Activated CD8-positive, alpha-beta memory T cell treated with anti-CD3 and anti-CD28 coated beads, Interleukin-2, amount 10 ng/mL, durations not matched to agents 7 days and 5 days (primary cell): ENCODE measurements at regions of chr6 and their contacts with region 1.

Region 1: DNA sequence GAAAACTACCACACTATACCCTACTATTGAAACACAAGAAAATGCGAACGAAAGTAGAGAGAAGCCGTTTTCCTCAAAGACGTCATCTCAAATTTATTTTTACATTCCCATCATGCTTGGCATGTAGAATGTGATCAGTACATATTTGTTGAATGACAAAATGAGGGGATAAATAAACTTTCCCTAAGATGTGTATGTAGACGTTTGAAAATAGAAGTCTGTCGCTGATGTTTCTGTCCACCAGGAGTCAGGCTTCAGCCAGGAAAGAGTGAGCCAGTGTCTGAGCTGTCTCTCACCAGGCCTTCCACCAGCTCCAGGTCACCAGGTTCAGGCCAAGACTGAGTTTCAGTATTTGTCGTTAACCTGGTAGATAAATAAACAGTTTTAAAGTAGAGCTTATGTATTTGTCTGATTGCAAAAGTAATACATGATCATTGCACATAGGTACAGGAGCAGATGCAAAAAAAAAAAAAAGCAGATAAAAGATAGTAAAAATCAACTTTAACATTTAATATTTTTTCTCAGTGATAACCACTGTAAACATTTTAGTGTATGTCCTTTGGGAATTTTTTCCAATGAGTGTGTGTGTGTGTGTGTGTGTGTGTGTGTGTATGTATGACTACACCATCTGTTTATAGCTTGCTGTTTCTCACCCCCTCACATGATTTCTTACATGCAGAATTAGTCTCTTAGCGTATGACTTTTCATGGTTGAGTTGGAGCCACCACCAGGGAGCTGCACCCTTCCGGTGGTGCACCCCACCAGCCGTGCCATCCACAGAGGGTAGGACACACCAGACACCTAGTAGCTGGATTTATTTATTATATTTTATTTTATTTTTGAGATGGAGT is 26.2 kb downstream of the WRNIP1 start:
- DNase-seq: peak; percentile 86
- ATAC-seq: peak; percentile 82
- H3K4me3 Mint-ChIP-seq: no peak overlapping the region
- H3K27ac Mint-ChIP-seq: peak overlapping the region; percentile 76
- H3K4me1 Mint-ChIP-seq: peaks cover 37% of the 10 kb centered on the region
- H3K27me3 Mint-ChIP-seq: no peaks in the 10 kb centered on the region

Region 2: GRCh38 chr6:2765166-2765895 is 26.0 kb before region 1 on chr6 and contains the start of gene WRNIP1:
- CTCF ChIA-PET with region 1: interaction called, 33 read pairs
- DNase-seq: peak; percentile 99
- ATAC-seq: peak; percentile 89
- H3K4me3 Mint-ChIP-seq: peak within 1 kb of the TSS; percentile 95
- H3K27ac Mint-ChIP-seq: peak within 1 kb of the TSS; percentile 98
- H3K4me1 Mint-ChIP-seq: peaks cover 47% of the 10 kb centered on the region
- H3K27me3 Mint-ChIP-seq: no peaks in the 10 kb centered on the region
- total RNA-seq, gene WRNIP1: 48.7 to 53.3 TPM

Region 3: GRCh38 chr6:2876210-2877056 is 85.1 kb after region 1 on chr6:
- CTCF ChIA-PET with region 1: interaction called, 10 read pairs
- DNase-seq: no peak
- ATAC-seq: peak; percentile 45
- H3K4me3 Mint-ChIP-seq: peak overlapping the region; percentile 76
- H3K27ac Mint-ChIP-seq: peak overlapping the region; percentile 92
- H3K4me1 Mint-ChIP-seq: peaks cover 77% of the 10 kb centered on the region
- H3K27me3 Mint-ChIP-seq: no peaks in the 10 kb centered on the region

Region 4: DNA sequence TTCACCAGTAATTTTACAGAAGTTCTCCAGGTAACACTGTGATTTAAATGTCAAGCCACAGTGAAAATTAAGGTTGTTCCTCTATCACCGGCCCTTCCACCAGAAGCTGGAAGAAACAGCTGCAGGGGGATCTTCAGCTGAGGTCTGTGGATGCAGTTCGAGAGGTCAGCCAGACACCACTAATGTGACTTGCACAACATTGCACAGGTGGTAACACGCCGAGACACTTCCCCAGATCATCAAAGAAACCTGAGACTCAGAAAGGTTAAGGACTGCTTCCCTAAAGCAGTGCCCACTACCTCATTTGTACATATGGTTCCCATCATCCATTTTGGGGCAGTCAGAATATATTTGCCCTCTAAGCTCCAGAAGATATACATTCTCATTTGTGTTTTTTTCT is 119.8 kb after region 1 on chr6:
- CTCF ChIA-PET with region 1: interaction called, 17 read pairs
- DNase-seq: no peak
- ATAC-seq: no peak
- H3K4me3 Mint-ChIP-seq: no peak overlapping the region
- H3K27ac Mint-ChIP-seq: no peak overlapping the region
- H3K4me1 Mint-ChIP-seq: peaks cover 24% of the 10 kb centered on the region
- H3K27me3 Mint-ChIP-seq: no peaks in the 10 kb centered on the region